ENCODE measurements at regions of chr3 and their contacts with region 1.

Region 1: GRCh38 chr3:161991901-161992540 is 495.4 kb downstream of the OTOL1 start:
- DNase-seq: peak; percentile 67
- H3K4me3 ChIP-seq: no peak overlapping the region
- H3K27ac ChIP-seq: peak overlapping the region; percentile 60
- H3K4me1 ChIP-seq: peaks cover 18% of the 10 kb centered on the region
- H3K27me3 ChIP-seq: no peaks in the 10 kb centered on the region
- CTCF ChIP-seq: no peak

Region 2: GRCh38 chr3:162170581-162170980 is 178.6 kb after region 1 on chr3:
- CTCF ChIA-PET with region 1: no interaction called
- POLR2A ChIA-PET with region 1: interaction called, 17 read pairs
- intact Hi-C with region 1: no loop called
- DNase-seq: peak; percentile 39
- H3K4me3 ChIP-seq: no peak overlapping the region
- H3K27ac ChIP-seq: no peak overlapping the region
- H3K4me1 ChIP-seq: peaks cover 5% of the 10 kb centered on the region
- H3K27me3 ChIP-seq: no peaks in the 10 kb centered on the region
- CTCF ChIP-seq: no peak

Measured in A673 (cell line).